GM13976 (cell line): ENCODE measurements at regions of chr9 and their contacts with region 1.

Region 1: GRCh38 chr9:69672596-69673310 is 582 bp upstream of the APBA1 start:
- DNase-seq: peak; percentile 84
- CTCF ChIP-seq: peak; percentile 79

Region 2: GRCh38 chr9:69874301-69875060 is 201.7 kb after region 1 on chr9:
- in situ Hi-C with region 1: loop called (anchors 25 kb)
- DNase-seq: no peak
- CTCF ChIP-seq: no peak